ENCODE measurements at regions of chr18 and their contacts with region 1.

Region 1: GRCh38 chr18:61502472-61502871 is 169.2 kb downstream of the CDH20 start:
- DNase-seq: peak in 2 of 6 donors; percentile 9 to 39
- ATAC-seq: peak in 3 of 4 donors; percentile 71 to 83 (median 75)
- H3K4me3 ChIP-seq: no peak overlapping the region
- H3K27ac ChIP-seq: no peak overlapping the region
- H3K4me1 ChIP-seq: no peaks in the 10 kb centered on the region
- H3K27me3 ChIP-seq: no peaks in the 10 kb centered on the region
- CTCF ChIP-seq: peak in 3 of 4 donors; percentile 43 to 56 (median 49)

Region 2: DNA sequence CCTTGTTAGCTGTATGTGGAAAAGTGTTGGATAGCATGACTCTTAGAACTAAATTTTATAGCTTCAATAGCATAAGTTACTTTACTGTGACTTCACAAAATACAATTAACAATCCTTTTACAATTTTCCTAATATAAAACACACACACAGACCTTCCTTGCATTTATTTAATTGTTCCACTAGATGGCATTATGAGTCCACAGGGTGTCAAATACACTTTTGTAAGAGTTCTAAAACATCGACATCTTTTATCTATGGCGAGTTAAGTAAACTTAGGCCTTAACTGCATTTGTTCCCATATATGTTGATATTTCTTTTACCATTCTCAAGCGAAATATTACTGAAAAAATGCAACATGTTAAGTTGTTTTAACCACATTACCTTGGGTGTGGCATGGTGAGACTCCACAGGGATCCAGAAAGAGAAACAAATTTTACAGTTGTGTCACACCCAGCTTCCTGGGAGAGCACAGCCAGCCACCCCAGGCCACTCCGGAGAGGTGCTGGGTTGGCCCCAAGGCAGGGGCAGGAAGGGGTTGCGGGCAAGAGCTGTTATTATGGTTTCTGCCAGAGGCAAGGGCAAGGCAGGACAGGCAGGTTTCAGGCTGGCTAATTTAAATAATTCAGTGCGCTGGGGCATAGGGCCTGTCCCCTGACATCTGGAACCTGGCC is 817.5 kb before region 1 on chr18:
- intact Hi-C with region 1: loop called in 2 of 3 experiments (anchors 10 kb)
- DNase-seq: no peak
- ATAC-seq: peak in 1 of 4 donors; percentile 46
- H3K4me3 ChIP-seq: no peak overlapping the region
- H3K27ac ChIP-seq: no peak overlapping the region
- H3K4me1 ChIP-seq: no peaks in the 10 kb centered on the region
- H3K27me3 ChIP-seq: no peaks in the 10 kb centered on the region
- CTCF ChIP-seq: peak in 2 of 4 donors; percentile 43 to 44

Region 3: DNA sequence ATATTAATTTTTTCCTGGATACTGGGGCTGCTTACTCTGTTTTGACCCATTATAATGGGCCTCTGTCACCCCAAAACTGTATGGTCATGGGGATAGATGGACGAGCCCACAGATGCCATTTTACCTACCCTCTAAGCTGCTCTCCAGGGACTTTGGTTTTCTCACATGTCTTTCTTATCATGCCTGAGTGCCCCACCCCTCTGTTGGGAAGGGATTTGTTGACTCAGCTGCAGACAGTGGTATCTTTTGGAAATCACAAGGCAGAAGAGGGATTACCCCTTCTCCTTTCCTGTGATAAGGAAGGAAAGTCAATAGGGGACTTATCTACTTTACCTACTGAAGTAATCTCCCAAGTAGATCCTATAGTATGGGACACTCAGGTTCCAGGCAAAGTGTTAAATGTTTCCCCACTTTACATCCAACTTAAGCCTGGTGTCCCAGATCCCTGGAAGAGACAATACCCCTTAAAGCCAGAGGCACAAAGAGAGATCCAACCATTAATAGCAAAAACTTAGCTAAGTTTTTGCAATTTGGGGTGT is 207.7 kb after region 1 on chr18:
- intact Hi-C with region 1: no loop called
- DNase-seq: no peak
- ATAC-seq: no peak
- H3K4me3 ChIP-seq: no peak overlapping the region
- H3K27ac ChIP-seq: no peak overlapping the region
- H3K4me1 ChIP-seq: no peaks in the 10 kb centered on the region
- H3K27me3 ChIP-seq: no peaks in the 10 kb centered on the region
- CTCF ChIP-seq: no peak

Measured in pancreas (tissue), 10 donors.